ENCODE measurements at regions of chrX and their contacts with region 1.

Region 1: DNA sequence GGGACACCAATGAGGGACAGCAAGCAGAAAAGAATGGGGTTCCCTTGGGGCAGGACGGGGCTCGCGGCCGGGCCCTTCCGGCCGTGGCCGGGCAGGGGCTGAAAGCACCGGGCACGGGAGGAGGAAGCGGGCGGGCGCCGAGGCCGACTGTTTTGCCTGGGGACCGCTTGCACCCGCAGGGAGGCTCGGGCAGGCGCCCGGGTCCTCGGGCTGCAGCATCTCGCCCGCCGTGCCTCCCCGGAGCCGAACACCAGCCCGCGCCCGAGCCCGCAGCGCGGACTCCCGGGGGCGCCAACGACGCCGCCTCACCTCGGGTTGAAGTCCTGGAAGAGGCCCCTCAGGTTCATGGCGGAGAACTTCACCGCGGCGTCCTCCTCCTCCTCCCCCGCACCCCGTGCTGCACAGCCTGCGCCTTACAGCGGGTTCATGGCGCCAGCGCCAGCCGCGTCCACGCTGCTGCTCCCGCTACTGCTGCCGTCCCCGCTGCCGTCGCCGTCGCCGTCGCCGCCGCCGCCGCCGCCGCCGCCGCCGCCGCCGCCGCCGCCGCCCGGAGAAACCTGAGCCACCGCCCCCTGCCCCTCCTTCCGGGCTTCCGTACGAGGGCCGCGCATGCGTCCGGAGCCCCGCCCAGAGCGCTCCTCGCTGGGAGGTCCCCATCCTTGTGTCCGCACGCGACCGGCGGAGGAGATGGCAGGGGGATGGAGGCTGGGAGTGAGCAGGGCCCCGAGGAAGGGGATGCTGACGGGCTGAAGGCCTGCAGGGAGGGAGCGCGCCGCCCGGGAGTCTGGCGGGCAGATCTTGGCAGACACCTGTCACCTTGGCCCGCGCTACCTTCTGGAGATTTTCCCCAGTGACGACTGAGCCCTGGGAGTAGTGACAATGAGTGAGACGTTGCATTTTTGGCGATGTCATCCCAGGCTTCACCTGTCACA is at the start of gene TMEM185A:
- DNase-seq: peak; percentile 75
- H3K4me3 Mint-ChIP-seq: peak within 1 kb of the TSS; percentile 87
- H3K27ac Mint-ChIP-seq: peak within 1 kb of the TSS; percentile 63
- H3K4me1 Mint-ChIP-seq: peaks cover 34% of the 10 kb centered on the region
- H3K27me3 Mint-ChIP-seq: no peaks in the 10 kb centered on the region
- total RNA-seq, gene TMEM185A: 7.2 to 7.5 TPM

Region 2: DNA sequence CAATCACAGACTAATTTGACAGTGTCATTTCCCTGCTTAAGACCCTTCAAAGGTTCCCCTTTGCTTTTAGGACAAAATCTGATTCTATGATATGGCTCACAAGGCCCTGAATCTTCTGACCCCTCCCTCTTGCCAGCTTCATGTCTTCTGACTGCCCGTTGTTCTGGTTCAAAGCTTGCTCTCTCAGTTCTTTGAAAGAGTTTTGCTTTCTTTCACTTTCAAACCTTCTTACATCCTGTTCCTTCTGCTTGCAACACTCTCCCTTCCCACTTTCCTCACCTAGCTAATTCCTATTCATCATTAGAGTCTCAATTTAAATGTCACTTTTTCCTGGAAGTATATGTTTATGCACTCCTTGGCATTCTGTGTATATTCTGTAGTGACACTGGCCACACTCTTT is 425.6 kb before region 1 on chrX:
- CTCF ChIA-PET with region 1: no interaction called
- intact Hi-C with region 1: no loop called
- DNase-seq: no peak
- H3K4me3 Mint-ChIP-seq: no peak overlapping the region
- H3K27ac Mint-ChIP-seq: no peak overlapping the region
- H3K4me1 Mint-ChIP-seq: no peaks in the 10 kb centered on the region
- H3K27me3 Mint-ChIP-seq: peaks cover 2% of the 10 kb centered on the region

Region 3: DNA sequence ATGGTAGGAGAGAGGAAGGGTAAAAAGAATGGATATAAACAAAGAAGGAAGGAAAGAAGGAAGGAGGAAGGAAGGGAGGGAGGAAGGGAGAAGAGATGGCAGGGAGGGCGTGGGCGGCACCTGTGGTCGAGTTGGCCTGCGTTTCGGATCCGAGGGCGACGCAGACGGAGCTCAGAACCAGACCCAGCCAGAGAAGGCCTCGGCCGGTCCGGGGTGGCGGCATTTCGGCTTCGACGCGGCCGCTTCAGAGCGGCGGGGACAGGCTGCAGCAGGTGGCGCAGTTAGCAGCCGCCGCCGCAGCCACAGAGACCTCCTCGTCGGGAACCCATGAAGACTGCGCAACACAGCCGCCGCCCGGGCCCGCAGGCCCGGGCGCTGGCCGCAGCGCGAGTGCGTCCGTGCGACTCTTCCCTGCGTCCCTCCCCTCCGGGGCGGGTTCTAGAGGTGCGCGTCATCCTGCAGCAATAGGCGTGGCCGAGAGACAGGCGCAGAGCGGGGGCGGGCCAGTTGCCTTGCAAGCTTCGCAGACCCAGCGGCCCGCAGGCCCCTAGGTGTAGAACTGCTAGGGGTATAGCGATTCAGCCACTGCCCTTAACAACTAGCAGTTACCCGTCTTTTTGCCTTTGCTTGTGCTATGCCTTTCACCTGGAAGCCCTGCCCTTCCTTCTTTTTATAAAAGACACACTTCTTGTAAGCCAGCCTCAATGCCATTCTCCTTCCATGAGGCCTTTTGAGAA is 126.4 kb before region 1 on chrX and contains the start of gene IDS:
- CTCF ChIA-PET with region 1: interaction called, 4 read pairs
- intact Hi-C with region 1: loop called (anchors 1 kb)
- DNase-seq: peak; percentile 89
- H3K4me3 Mint-ChIP-seq: peak within 1 kb of the TSS; percentile 86
- H3K27ac Mint-ChIP-seq: peak within 1 kb of the TSS; percentile 93
- H3K4me1 Mint-ChIP-seq: peaks cover 26% of the 10 kb centered on the region
- H3K27me3 Mint-ChIP-seq: no peaks in the 10 kb centered on the region
- total RNA-seq, gene IDS: 39.9 to 43.1 TPM

Region 4: DNA sequence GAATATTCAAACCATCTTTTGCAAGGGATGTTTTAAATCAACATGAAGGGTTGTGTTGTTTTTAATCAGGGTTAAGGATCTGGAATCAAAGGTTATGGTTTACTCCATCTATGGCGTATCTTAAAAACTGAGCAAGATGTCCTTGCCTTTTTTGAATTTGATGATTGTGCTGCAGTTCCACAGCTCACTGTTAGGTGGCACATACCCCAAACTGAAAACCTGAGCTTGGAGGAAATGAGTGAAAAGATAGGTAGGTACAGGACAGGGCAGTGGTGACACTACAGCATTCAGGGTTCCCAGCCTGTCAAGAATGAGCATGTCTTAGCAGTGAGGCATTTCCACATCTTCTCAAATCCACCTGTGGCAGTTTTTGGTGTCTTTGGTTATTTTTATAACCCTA is 103.8 kb before region 1 on chrX:
- CTCF ChIA-PET with region 1: no interaction called
- intact Hi-C with region 1: loop called (anchors 5 kb)
- DNase-seq: peak; percentile 47
- H3K4me3 Mint-ChIP-seq: no peak overlapping the region
- H3K27ac Mint-ChIP-seq: no peak overlapping the region
- H3K4me1 Mint-ChIP-seq: peaks cover 28% of the 10 kb centered on the region
- H3K27me3 Mint-ChIP-seq: no peaks in the 10 kb centered on the region

Region 5: GRCh38 chrX:149539283-149540130 is 92.0 kb before region 1 on chrX:
- CTCF ChIA-PET with region 1: no interaction called
- intact Hi-C with region 1: loop called (anchors 1 kb)
- DNase-seq: peak; percentile 92
- H3K4me3 Mint-ChIP-seq: peak overlapping the region; percentile 79
- H3K27ac Mint-ChIP-seq: peak overlapping the region; percentile 73
- H3K4me1 Mint-ChIP-seq: peaks cover 2% of the 10 kb centered on the region
- H3K27me3 Mint-ChIP-seq: no peaks in the 10 kb centered on the region

Region 6: DNA sequence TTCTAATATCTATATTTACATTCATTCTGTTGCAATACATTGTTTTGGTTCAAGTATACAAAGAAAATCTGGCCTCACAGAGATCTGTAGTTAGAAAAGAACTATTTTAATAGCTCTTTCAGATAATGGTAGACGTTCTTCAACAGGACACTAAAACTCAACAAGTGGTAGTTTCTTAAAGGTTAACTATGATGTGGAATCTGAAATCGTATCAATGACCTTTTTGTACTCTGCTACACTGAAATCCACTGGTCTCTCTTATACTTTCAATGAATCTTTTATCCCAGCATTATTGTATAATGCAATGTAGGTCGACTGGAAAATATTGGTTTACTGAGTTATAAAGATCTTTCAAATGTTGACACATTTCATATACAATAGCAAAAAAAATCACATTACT is 12.6 kb before region 1 on chrX:
- CTCF ChIA-PET with region 1: no interaction called
- intact Hi-C with region 1: no loop called
- DNase-seq: no peak
- H3K4me3 Mint-ChIP-seq: no peak overlapping the region
- H3K27ac Mint-ChIP-seq: no peak overlapping the region
- H3K4me1 Mint-ChIP-seq: peaks cover 4% of the 10 kb centered on the region
- H3K27me3 Mint-ChIP-seq: no peaks in the 10 kb centered on the region

Region 7: DNA sequence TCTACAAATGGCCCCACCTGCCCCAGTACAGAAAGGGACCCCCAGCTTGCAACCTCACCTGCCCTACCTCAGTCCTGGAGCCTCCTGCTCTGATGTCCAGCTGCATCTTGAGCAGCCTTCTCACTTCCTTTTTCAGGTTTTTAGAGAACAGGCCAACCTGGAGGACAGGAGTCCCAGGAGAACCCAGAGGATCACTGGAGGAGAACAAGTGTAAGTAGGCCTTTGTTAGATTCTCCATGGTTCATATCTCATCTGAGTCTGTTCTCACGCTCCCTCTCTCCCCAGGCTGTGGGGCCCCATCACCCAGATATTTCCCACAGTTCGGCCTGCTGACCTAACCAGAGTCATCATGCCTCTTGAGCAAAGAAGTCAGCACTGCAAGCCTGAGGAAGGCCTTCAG is 84.0 kb after region 1 on chrX:
- CTCF ChIA-PET with region 1: no interaction called
- intact Hi-C with region 1: loop called (anchors 10 kb)
- DNase-seq: no peak
- H3K4me3 Mint-ChIP-seq: no peak overlapping the region
- H3K27ac Mint-ChIP-seq: no peak overlapping the region
- H3K4me1 Mint-ChIP-seq: no peaks in the 10 kb centered on the region
- H3K27me3 Mint-ChIP-seq: no peaks in the 10 kb centered on the region

Region 8: DNA sequence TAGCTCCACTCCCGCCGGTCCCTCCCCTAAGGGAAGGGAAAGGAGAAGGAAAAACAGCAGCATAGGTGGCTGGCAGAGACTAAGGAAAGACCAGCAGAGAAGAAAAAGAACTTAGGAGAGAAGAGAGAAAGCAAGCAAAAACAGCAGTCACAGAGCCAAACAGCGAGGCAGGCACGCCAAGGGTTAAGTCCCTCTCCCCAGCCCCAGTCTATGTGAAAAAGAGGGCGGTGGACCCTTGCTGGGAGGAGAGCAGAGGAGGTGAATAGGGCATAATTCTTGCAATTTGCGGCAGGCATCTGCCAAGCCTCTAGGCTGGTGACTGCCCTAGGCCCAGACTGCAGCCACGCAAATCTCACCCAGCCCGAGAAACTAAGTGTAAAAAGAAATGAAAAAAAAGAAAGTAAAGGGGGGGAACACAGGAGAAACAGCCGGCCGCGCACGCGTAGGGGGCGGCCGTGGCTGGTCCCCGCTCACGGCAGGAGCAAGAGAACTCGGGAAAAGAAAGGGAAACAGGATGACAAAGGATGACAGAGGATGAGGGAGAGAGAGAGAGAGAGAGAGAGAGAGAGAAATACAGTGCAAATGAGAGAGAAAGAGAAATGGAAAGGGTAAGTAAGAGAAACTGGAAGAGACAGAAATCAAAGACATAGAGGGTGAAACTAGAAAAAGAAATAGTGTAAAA is 198.8 kb after region 1 on chrX:
- CTCF ChIA-PET with region 1: no interaction called
- intact Hi-C with region 1: loop called (anchors 5 kb)
- DNase-seq: peak; percentile 15
- H3K4me3 Mint-ChIP-seq: peak overlapping the region; percentile 54
- H3K27ac Mint-ChIP-seq: peak overlapping the region; percentile 80
- H3K4me1 Mint-ChIP-seq: peaks cover 29% of the 10 kb centered on the region
- H3K27me3 Mint-ChIP-seq: peaks cover 3% of the 10 kb centered on the region

Region 9: DNA sequence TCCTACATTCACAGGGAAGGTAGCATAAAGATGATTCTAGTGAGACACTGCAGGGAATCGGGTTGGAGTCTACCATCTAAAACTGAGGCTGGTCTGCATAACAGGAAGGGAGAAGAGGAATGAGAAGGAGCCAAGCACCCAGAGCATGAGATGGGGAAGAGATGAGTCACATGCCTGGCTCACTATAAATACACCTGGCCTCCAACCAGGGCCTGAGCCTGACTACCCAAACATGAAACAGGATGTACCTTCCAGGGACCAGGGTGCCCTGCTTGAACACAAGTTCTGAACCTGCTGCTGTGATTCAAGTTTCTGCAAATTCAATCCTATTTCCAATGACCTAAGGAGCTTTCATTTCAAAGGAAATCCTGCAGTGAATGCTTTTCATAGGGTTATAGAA is 1242.1 kb after region 1 on chrX:
- CTCF ChIA-PET with region 1: no interaction called
- intact Hi-C with region 1: no loop called
- DNase-seq: peak; percentile 46
- H3K4me3 Mint-ChIP-seq: no peak overlapping the region
- H3K27ac Mint-ChIP-seq: no peak overlapping the region
- H3K4me1 Mint-ChIP-seq: peaks cover 38% of the 10 kb centered on the region
- H3K27me3 Mint-ChIP-seq: no peaks in the 10 kb centered on the region

Measured in activated naive CD4-positive, alpha-beta T cell treated with anti-CD3 and anti-CD28 coated beads for 36 hours (primary cell).